ENCODE measurements at regions of chr5 and their contacts with region 1.

Region 1: DNA sequence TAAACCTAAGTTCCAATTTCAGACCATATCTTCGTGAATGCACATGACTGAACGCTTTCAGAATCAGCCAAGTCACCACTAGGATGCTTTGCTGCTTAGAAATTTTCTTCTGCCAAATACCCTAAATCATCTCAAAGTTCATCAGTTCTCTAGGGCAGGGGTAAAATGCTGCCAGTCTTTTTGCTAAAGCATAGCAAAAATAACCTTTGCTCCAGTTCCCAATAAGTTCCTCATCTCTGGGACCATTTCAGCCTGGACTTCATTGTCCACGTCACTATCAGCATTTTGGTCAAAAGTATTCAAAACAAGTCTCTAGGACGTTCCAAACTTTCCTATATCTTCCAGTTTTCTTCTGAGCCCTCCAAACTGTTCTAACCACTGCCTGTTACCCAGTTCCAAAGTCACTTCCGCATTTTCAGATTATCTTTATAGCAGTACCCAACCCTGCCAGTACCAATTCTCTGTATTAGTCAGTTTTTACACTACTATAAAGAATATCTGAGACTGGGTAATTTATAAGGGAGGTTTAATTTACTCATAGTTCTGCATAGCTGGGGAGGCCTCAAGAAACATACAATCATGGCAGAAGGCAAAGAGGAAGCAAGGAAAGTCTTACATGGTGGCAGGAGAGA is 74.8 kb downstream of the NR3C1 start:
- DNase-seq: no peak
- ATAC-seq: no peak

Region 2: GRCh38 chr5:143395638-143396352 is 67.1 kb after region 1 on chr5:
- intact Hi-C with region 1: loop called in 1 of 2 experiments (anchors 5 kb)
- DNase-seq: no peak
- ATAC-seq: no peak

Region 3: GRCh38 chr5:143495821-143496275 is 167.1 kb after region 1 on chr5:
- intact Hi-C with region 1: no loop called
- DNase-seq: no peak
- ATAC-seq: peak; percentile 66 to 77